ENCODE measurements at regions of chr9 and their contacts with region 1.

Region 1: DNA sequence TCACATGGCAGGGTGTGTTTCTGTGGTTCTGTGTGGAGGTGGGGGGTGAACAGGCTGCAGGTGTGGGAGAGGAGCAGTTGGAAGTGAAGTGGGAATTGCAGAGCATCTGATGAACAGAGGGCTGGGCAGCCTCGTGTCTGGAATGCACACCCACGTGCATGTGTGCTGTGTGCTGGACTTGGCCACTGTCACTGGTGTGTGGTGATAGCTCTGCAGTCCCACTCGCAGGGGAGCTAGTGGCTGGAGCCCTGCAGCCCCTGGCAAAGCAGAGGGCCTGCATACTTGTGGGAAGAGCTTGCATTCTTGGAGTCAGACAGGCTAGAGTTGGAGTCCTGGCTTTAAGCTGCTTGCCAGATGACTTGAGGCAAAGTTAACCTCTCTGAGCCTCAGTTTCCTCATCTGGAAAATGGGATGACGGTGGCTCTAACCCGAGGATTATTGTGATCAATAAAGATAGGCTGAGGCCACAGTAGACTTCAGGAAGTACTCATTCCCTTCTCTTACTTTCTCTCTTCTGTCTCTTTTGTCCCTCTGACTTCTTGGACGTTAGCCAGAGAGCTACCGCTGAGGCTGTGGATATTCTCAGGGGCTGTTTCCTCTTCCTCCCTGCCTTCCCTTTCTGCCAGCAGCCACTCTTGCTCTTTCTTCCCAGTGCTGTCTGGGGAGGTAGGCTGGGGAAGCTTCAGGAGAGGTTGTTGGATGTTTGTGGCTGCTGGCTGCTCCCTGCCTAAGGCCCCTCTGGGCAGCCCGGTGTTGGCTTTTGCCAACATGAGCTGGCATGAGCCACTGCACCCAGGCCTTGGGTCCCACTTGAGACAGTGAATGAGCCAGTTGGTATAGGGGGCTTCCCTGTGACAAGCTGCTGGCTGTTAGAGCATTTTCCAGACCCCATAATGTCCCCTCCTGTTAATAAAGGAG is 18.3 kb downstream of the PSAT1 start:
- DNase-seq: no peak

Region 2: GRCh38 chr9:76876098-76876497 is 1439.1 kb before region 1 on chr9:
- intact Hi-C with region 1: loop called in 1 of 2 experiments (anchors 5 kb)
- DNase-seq: no peak

Region 3: GRCh38 chr9:78261403-78262001 is 53.7 kb before region 1 on chr9:
- intact Hi-C with region 1: no loop called
- DNase-seq: no peak

Measured in posterior vena cava (tissue), 2 donors.